Sigmoid colon (tissue), 7 donors: ENCODE measurements at regions of chr2 and their contacts with region 1.

Region 1: GRCh38 chr2:69118609-69119008 is 105.6 kb downstream of the ANTXR1 start:
- DNase-seq: peak; percentile 71
- H3K4me3 ChIP-seq: no peak overlapping the region
- H3K27ac ChIP-seq: peak overlapping the region; percentile 65 to 81 (median 78)
- H3K4me1 ChIP-seq: peaks cover 0 to 39% (median 28%) of the 10 kb centered on the region in 4 donors
- H3K27me3 ChIP-seq: no peaks in the 10 kb centered on the region
- CTCF ChIP-seq: no peak
- EP300 ChIP-seq: no peak
- POLR2A ChIP-seq: no peak

Region 2: GRCh38 chr2:68018727-68019126 is 1099.9 kb before region 1 on chr2:
- intact Hi-C with region 1: no loop called
- DNase-seq: no peak
- H3K4me3 ChIP-seq: no peak overlapping the region
- H3K27ac ChIP-seq: no peak overlapping the region
- H3K4me1 ChIP-seq: no peaks in the 10 kb centered on the region
- H3K27me3 ChIP-seq: no peaks in the 10 kb centered on the region
- CTCF ChIP-seq: no peak
- EP300 ChIP-seq: no peak
- POLR2A ChIP-seq: no peak

Region 3: DNA sequence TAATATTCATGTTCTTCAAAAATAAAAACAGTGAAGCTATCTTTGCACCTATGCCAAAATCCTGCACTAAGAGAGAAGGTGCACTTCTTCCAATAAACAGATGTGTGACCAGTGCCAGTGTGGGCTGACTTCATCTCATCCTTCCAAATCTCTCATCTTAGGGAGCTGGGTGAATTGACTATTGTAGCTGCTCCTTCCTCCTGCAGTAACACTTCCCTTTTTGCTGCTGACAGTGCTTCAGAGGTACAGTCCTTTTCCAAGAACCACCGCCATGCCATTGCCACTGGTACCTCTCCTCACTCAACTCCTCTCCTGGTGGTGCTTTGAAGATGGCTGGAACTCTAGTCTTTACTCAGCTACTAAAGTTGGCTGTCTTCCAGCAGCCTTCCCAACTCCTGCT is 426.1 kb before region 1 on chr2:
- intact Hi-C with region 1: no loop called
- DNase-seq: no peak
- H3K4me3 ChIP-seq: no peak overlapping the region
- H3K27ac ChIP-seq: no peak overlapping the region
- H3K4me1 ChIP-seq: no peaks in the 10 kb centered on the region
- H3K27me3 ChIP-seq: no peaks in the 10 kb centered on the region
- CTCF ChIP-seq: no peak
- EP300 ChIP-seq: no peak
- POLR2A ChIP-seq: no peak

Region 4: DNA sequence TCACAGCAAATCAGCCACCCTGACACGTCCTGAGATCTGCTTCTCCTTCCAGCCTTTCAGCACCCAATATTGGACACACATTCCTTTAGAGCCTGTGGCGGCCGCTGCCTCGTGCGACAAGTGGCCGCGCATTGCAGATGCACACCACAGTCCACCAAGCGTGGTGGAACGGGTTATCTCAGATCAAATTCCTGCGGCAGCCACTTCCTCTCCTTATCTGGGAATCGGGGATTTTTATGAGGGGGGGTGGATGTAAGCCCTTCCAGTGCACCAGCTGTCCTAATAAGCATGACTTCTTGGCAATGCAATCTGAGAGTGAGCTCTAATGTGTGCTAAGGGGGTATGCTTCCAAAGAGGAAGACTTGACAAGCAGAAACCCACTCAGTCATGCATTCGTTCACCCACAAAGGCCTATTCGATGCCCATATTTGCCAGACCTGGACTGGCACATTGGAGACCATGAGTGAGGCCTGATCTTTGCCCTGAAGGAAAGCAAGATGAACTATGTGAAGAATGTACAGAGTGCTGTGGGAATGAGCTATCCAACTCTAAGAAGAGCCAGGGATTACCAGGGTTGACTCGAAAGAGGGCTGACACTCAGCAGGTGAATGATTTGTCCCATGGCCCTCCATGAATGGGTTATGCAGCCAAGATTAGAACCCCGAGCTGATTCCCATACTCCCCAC is 229.0 kb before region 1 on chr2:
- intact Hi-C with region 1: no loop called
- DNase-seq: no peak
- H3K4me3 ChIP-seq: no peak overlapping the region
- H3K27ac ChIP-seq: no peak overlapping the region
- H3K4me1 ChIP-seq: no peaks in the 10 kb centered on the region
- H3K27me3 ChIP-seq: no peaks in the 10 kb centered on the region
- CTCF ChIP-seq: no peak
- EP300 ChIP-seq: no peak
- POLR2A ChIP-seq: no peak

Region 5: GRCh38 chr2:68948710-68949109 is 169.9 kb before region 1 on chr2:
- intact Hi-C with region 1: no loop called
- DNase-seq: no peak
- H3K4me3 ChIP-seq: no peak overlapping the region
- H3K27ac ChIP-seq: no peak overlapping the region
- H3K4me1 ChIP-seq: peaks cover 0 to 2% (median under 1%) of the 10 kb centered on the region in 4 donors
- H3K27me3 ChIP-seq: no peaks in the 10 kb centered on the region
- CTCF ChIP-seq: no peak
- EP300 ChIP-seq: no peak
- POLR2A ChIP-seq: no peak

Region 6: DNA sequence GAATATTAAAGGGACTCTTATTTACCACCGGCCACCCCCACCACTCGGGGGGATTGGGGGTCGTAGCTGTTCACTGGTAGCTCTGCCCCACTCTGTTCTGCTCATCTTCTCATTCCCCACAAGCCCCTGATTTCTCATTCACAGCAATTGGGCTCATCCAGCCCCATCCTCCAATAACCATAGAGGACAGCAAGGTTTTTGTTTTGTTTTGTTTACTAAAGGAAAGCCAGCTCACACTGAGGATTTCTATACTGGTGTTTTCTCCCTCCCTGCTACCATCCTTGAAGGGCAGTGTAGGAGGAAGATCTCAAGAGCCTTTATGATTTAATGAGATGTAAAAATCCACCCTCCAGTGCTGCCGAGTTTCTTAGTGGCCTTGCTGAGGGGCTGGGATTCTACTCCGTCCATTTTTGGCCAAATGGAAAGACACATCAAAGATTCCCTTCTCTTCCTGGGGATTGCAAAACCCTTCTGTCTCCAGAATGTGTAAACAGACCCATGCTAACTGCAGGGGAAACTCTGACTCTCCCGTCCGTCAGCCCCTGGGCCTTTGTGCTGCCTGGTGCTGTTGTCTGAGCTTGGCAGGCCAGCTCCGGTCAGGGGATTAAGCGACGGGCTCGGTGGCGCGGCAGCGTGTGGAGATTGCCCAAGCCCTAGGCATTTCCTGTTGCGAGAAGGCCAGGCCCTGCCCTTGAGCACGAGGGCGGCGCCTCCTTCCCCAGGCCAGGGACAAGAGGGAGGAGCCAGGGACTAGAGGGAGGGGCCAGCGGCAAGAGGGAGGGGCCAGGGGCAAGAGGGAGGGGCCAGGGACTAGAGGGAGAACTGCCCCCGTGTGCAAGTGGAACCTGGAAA is 59.4 kb after region 1 on chr2:
- intact Hi-C with region 1: loop called (anchors 10 kb)
- DNase-seq: peak; percentile 97
- H3K4me3 ChIP-seq: peak overlapping the region in 2 of 4 donors; percentile 12 to 13
- H3K27ac ChIP-seq: peak overlapping the region; percentile 75 to 90 (median 85)
- H3K4me1 ChIP-seq: peaks cover 0 to 55% (median 34%) of the 10 kb centered on the region in 4 donors
- H3K27me3 ChIP-seq: no peaks in the 10 kb centered on the region
- CTCF ChIP-seq: no peak
- EP300 ChIP-seq: peak in 3 of 4 donors; percentile 26 to 76 (median 70)
- POLR2A ChIP-seq: no peak